PC-3 (cell line): ENCODE measurements at regions of chr3 and their contacts with region 1.

Region 1: DNA sequence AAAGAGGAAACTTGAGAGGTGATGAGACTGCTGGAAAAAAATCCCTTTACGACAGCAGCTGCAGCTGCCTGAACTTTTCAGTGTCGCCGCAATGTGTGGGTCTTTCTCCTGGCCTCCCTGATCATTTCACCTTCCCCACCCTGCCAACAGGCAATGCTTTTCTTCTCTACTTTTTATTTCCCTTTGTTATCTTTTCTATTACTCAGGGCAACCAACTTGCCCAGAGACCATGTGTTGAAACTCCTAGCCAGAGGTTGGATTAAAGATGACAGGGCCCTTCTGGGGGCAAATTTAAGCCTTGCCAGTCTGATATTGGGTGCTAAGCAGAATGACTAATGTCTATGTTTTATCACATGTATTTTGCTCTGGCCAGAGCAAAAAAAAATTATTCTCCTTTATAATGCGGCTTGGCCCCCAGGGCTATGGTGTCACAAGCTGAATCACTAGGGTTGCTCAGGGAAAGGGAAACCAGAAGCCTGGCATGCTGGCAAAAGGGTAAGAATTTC is 51.5 kb upstream of the CFAP20DC start:
- DNase-seq: peak; percentile 94
- ATAC-seq: peak; percentile 79
- H3K4me3 ChIP-seq: no peak overlapping the region
- H3K27ac ChIP-seq: peak overlapping the region; percentile 81
- H3K4me1 ChIP-seq: peaks cover 32% of the 10 kb centered on the region
- H3K27me3 ChIP-seq: no peaks in the 10 kb centered on the region
- CTCF ChIP-seq: no peak

Region 2: GRCh38 chr3:58422756-58423325 is 678.4 kb before region 1 on chr3:
- CTCF ChIA-PET with region 1: no interaction called
- POLR2A ChIA-PET with region 1: no interaction called
- intact Hi-C with region 1: no loop called
- DNase-seq: peak; percentile 40
- ATAC-seq: peak; percentile 6; the same call in 1 of the 2 replicates
- H3K4me3 ChIP-seq: no peak overlapping the region
- H3K27ac ChIP-seq: no peak overlapping the region
- H3K4me1 ChIP-seq: peaks cover 18% of the 10 kb centered on the region
- H3K27me3 ChIP-seq: no peaks in the 10 kb centered on the region
- CTCF ChIP-seq: peak; percentile 45

Region 3: GRCh38 chr3:59085976-59086375 is 15.3 kb before region 1 on chr3:
- CTCF ChIA-PET with region 1: no interaction called
- POLR2A ChIA-PET with region 1: interaction called, 10 read pairs
- intact Hi-C with region 1: loop called (anchors 2 kb)
- DNase-seq: peak; percentile 58
- ATAC-seq: peak; percentile 76
- H3K4me3 ChIP-seq: no peak overlapping the region
- H3K27ac ChIP-seq: 0 out of 2 replicates have a peak overlapping the region, but pooled peaks have one; percentile 9
- H3K4me1 ChIP-seq: peaks cover 12% of the 10 kb centered on the region; the same call in 1 of the 2 replicates
- H3K27me3 ChIP-seq: no peaks in the 10 kb centered on the region
- CTCF ChIP-seq: no peak

Region 4: GRCh38 chr3:59185586-59186369 is 84.5 kb after region 1 on chr3:
- CTCF ChIA-PET with region 1: no interaction called
- POLR2A ChIA-PET with region 1: no interaction called
- intact Hi-C with region 1: no loop called
- DNase-seq: peak; percentile 28
- ATAC-seq: no peak
- H3K4me3 ChIP-seq: no peak overlapping the region
- H3K27ac ChIP-seq: no peak overlapping the region
- H3K4me1 ChIP-seq: peaks cover 8% of the 10 kb centered on the region; the same call in 1 of the 2 replicates
- H3K27me3 ChIP-seq: no peaks in the 10 kb centered on the region
- CTCF ChIP-seq: no peak